ENCODE measurements at regions of chr19 and their contacts with region 1.

Region 1: GRCh38 chr19:8355631-8356402 is 8.1 kb upstream of the ANGPTL4 start:
- DNase-seq: peak; percentile 99
- H3K4me3 Mint-ChIP-seq: no peak overlapping the region
- H3K27ac Mint-ChIP-seq: peak overlapping the region; percentile 21
- H3K4me1 Mint-ChIP-seq: peaks cover 20% of the 10 kb centered on the region
- H3K27me3 Mint-ChIP-seq: no peaks in the 10 kb centered on the region
- CTCF ChIP-seq: no peak

Region 2: GRCh38 chr19:8377598-8377997 is 21.8 kb after region 1 on chr19:
- CTCF ChIA-PET with region 1: interaction called, 23 read pairs
- POLR2A ChIA-PET with region 1: no interaction called
- intact Hi-C with region 1: no loop called
- DNase-seq: no peak
- H3K4me3 Mint-ChIP-seq: no peak overlapping the region
- H3K27ac Mint-ChIP-seq: no peak overlapping the region
- H3K4me1 Mint-ChIP-seq: no peaks in the 10 kb centered on the region
- H3K27me3 Mint-ChIP-seq: no peaks in the 10 kb centered on the region
- CTCF ChIP-seq: no peak

Region 3: DNA sequence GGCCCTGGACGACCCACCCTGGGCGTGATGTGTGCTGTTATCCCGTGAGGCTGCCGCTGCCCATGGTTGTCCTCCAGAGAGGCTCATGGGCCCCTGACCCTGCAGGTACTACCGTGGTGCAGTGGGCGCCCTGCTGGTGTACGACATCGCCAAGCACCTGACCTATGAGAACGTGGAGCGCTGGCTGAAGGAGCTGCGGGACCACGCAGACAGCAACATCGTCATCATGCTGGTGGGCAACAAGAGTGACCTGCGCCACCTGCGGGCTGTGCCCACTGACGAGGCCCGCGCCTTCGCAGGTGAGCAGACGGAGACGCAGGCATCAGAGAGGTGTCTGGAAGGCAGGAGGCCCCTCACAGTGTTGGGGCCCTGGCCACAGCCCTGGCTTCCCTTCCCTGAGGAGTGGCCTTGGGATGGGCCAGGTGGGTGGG is 46.2 kb after region 1 on chr19:
- CTCF ChIA-PET with region 1: interaction called, 64 read pairs
- POLR2A ChIA-PET with region 1: no interaction called
- intact Hi-C with region 1: no loop called
- DNase-seq: no peak
- H3K4me3 Mint-ChIP-seq: no peak overlapping the region
- H3K27ac Mint-ChIP-seq: no peak overlapping the region
- H3K4me1 Mint-ChIP-seq: peaks cover 6% of the 10 kb centered on the region
- H3K27me3 Mint-ChIP-seq: no peaks in the 10 kb centered on the region
- CTCF ChIP-seq: no peak

Region 4: GRCh38 chr19:8444645-8445487 is 89.0 kb after region 1 on chr19 and contains the start of gene HNRNPM:
- CTCF ChIA-PET with region 1: interaction called, 37 read pairs
- POLR2A ChIA-PET with region 1: interaction called, 4 read pairs
- intact Hi-C with region 1: loop called (anchors 10 kb)
- DNase-seq: peak; percentile 98
- H3K4me3 Mint-ChIP-seq: peak within 1 kb of the TSS; percentile 95
- H3K27ac Mint-ChIP-seq: peak within 1 kb of the TSS; percentile 99
- H3K4me1 Mint-ChIP-seq: peaks cover 21% of the 10 kb centered on the region
- H3K27me3 Mint-ChIP-seq: no peaks in the 10 kb centered on the region
- CTCF ChIP-seq: no peak
- total RNA-seq, gene HNRNPM: 149 and 161 TPM in 2 replicates

Region 5: DNA sequence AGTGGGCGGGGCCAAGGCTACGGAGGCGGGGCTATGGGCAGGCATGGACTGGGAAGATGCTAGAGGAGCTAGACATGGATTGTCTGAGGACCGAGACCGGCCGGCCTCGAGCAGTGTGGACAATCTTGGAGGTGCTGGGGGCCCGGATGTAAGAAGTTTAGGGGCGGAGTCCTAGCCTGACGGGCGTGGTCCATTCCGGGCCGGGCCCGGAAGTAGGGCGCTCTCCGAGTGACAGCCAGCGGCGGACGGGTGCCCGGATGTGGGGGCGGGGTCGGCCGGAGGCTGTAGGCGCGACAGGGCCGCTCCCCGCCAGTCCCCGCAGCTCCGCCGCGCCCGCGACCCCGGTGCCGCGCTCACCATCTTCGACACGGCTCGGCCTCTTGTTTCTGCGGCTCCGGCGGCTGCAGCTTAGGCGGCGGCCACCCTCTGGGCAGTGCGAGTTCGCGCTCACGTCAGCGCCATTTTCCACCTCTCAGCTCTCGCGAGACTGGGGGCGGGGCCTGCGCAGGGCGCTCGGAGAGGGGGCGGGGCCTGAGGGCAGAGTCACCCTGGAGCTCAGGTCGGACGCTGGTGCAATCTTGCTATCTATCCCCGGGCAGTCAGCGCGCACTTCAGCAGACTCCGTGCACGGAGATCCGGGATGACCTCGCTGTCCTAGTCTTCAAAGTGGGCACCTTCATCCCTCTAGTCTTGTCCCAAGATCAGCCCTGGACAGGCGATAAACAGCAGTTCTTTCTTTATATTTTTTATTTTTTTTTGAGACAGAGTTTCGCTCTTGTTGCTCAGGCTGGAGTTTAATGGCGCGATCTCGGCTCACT is 158.1 kb after region 1 on chr19 and contains the start of gene ZNF414:
- CTCF ChIA-PET with region 1: interaction called, 11 read pairs
- POLR2A ChIA-PET with region 1: interaction called, 5 read pairs
- intact Hi-C with region 1: no loop called
- DNase-seq: peak; percentile 98
- H3K4me3 Mint-ChIP-seq: peak within 1 kb of the TSS; percentile 85
- H3K27ac Mint-ChIP-seq: peak within 1 kb of the TSS; percentile 99
- H3K4me1 Mint-ChIP-seq: peaks cover 15% of the 10 kb centered on the region
- H3K27me3 Mint-ChIP-seq: no peaks in the 10 kb centered on the region
- CTCF ChIP-seq: no peak
- total RNA-seq, gene ZNF414: 16.3 and 27.2 TPM in 2 replicates